PC-3 (cell line): ENCODE measurements at regions of chr14 and their contacts with region 1.

Region 1: DNA sequence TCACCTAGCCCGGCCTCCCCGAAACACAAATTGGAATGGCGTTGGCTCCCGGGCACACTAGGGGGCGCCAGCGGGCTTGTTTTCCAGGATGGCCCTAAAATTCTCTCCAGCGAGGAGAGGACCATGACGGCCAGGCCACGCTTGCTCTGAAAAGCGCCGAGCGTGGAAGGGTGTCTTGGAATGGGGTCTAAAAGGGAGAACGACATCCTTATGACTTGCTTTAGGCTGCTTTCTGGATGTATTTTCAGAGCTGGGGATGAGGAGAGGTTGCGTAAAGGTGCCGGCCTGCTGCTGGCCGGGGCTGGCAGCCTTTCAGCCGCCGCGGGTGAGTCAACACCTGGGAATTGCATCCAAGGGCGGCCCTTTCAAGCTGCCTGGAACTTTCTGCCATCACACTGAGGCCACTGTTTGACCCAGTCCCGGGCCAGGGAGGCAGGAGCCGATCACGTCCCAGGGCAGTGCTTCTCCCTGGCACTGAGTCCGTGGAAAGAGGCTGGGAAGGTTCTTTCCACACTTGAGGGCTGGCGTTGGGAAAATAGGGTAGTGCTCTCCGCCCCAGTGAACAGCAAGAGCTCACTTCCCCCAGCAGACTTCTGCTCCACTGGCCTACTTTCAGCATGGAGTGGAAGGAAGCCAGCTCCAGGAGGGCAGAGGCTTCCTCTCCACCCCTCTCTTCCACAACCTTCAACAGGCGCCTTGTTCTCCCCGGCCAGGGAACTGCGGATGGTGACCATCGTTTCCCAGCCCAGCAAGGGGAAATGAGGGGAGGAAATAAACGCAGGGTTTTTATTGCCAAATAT is 216.2 kb downstream of the TTC8 start:
- DNase-seq: peak; percentile 90
- ATAC-seq: peak; percentile 91
- H3K4me3 ChIP-seq: peak overlapping the region; percentile 66
- H3K27ac ChIP-seq: peak overlapping the region; percentile 94
- H3K4me1 ChIP-seq: peaks cover 23% of the 10 kb centered on the region
- H3K27me3 ChIP-seq: no peaks in the 10 kb centered on the region
- CTCF ChIP-seq: peak; percentile 98

Region 2: GRCh38 chr14:89178802-89179535 is 138.3 kb after region 1 on chr14:
- CTCF ChIA-PET with region 1: no interaction called
- POLR2A ChIA-PET with region 1: interaction called, 4 read pairs
- intact Hi-C with region 1: loop called (anchors 2 kb)
- DNase-seq: peak; percentile 7
- ATAC-seq: no peak
- H3K4me3 ChIP-seq: no peak overlapping the region
- H3K27ac ChIP-seq: no peak overlapping the region
- H3K4me1 ChIP-seq: no peaks in the 10 kb centered on the region
- H3K27me3 ChIP-seq: no peaks in the 10 kb centered on the region
- CTCF ChIP-seq: no peak

Region 3: GRCh38 chr14:89237921-89238529 is 197.4 kb after region 1 on chr14:
- CTCF ChIA-PET with region 1: interaction called, 3 read pairs
- POLR2A ChIA-PET with region 1: no interaction called
- intact Hi-C with region 1: loop called (anchors 1 kb)
- DNase-seq: peak; percentile 52
- ATAC-seq: peak; percentile 72
- H3K4me3 ChIP-seq: no peak overlapping the region
- H3K27ac ChIP-seq: no peak overlapping the region
- H3K4me1 ChIP-seq: peaks cover 4% of the 10 kb centered on the region; the same call in 1 of the 2 replicates
- H3K27me3 ChIP-seq: no peaks in the 10 kb centered on the region
- CTCF ChIP-seq: peak; percentile 65

Region 4: GRCh38 chr14:89504602-89505313 is 464.1 kb after region 1 on chr14:
- CTCF ChIA-PET with region 1: no interaction called
- POLR2A ChIA-PET with region 1: no interaction called
- intact Hi-C with region 1: loop called (anchors 5 kb)
- DNase-seq: peak; percentile 35
- ATAC-seq: no peak
- H3K4me3 ChIP-seq: no peak overlapping the region
- H3K27ac ChIP-seq: no peak overlapping the region
- H3K4me1 ChIP-seq: peaks cover 28% of the 10 kb centered on the region
- H3K27me3 ChIP-seq: no peaks in the 10 kb centered on the region
- CTCF ChIP-seq: no peak

Region 5: GRCh38 chr14:89899917-89900663 is 859.4 kb after region 1 on chr14:
- CTCF ChIA-PET with region 1: interaction called, 16 read pairs
- POLR2A ChIA-PET with region 1: no interaction called
- intact Hi-C with region 1: loop called (anchors 1 kb)
- DNase-seq: peak; percentile 29
- ATAC-seq: peak; percentile 55
- H3K4me3 ChIP-seq: no peak overlapping the region
- H3K27ac ChIP-seq: no peak overlapping the region
- H3K4me1 ChIP-seq: no peaks in the 10 kb centered on the region
- H3K27me3 ChIP-seq: no peaks in the 10 kb centered on the region
- CTCF ChIP-seq: peak; percentile 73

Region 6: GRCh38 chr14:90159146-90159545 is 1118.5 kb after region 1 on chr14:
- CTCF ChIA-PET with region 1: no interaction called
- POLR2A ChIA-PET with region 1: no interaction called
- intact Hi-C with region 1: no loop called
- DNase-seq: no peak
- ATAC-seq: no peak
- H3K4me3 ChIP-seq: no peak overlapping the region
- H3K27ac ChIP-seq: no peak overlapping the region
- H3K4me1 ChIP-seq: no peaks in the 10 kb centered on the region
- H3K27me3 ChIP-seq: peaks cover 11% of the 10 kb centered on the region; the same call in 1 of the 2 replicates
- CTCF ChIP-seq: no peak